Head of caudate nucleus (tissue), 42 donors: ENCODE measurements at regions of chr9 and their contacts with region 1.

Region 1: GRCh38 chr9:101229606-101230005 is 155.2 kb downstream of the BAAT start:
- DNase-seq: peak in 1 of 42 donors; percentile 19

Region 2: DNA sequence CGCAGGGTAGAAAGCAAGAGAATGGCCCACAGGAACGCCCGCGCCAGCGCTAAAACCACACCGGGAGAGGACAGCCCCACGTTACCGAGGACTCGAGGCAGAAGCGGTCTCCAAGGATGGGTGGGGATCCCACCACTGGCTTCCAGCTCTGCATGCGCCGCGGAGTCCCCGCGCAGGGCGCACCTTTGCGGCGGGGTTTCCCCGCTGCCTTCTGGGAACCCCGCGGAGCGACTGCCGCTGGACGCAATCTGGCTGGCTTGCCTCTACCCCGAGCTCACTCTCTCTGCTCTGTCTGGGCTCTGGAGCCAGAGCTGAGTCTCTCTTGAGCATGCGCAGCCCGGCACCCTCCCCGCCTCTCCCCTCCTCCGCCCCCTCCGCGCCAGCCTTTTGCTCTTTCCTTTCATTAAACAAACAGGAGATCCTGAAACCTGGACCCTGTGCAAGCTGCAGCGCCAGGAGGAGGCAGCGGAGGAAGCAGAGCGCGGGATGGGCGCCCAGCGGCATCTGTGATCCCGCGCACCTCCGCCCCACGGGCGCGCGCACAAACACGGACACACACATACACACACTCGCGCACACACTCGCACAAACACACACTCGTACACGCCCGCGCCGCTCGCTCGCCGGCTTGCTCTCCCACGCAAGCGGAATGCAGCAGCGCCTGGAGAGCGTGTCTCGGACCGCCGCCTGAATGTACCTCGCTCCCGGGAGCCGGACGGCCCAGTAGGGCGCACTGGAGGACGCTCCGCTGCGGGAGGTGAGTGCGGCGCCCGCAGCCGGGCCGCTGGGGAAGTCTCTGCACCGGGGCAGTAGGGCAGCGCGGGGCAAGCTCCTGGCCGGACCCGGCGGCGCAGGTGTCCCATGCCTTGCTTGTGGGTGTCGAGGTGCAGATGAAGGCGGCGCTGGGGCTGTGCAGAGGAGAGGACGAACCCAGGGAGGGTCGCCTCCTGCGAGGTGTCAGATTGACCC is 201.0 kb before region 1 on chr9 and contains the start of gene PLPPR1:
- intact Hi-C with region 1: loop called (anchors 5 kb)
- DNase-seq: peak; percentile 74 to 96 (median 89)

Region 3: DNA sequence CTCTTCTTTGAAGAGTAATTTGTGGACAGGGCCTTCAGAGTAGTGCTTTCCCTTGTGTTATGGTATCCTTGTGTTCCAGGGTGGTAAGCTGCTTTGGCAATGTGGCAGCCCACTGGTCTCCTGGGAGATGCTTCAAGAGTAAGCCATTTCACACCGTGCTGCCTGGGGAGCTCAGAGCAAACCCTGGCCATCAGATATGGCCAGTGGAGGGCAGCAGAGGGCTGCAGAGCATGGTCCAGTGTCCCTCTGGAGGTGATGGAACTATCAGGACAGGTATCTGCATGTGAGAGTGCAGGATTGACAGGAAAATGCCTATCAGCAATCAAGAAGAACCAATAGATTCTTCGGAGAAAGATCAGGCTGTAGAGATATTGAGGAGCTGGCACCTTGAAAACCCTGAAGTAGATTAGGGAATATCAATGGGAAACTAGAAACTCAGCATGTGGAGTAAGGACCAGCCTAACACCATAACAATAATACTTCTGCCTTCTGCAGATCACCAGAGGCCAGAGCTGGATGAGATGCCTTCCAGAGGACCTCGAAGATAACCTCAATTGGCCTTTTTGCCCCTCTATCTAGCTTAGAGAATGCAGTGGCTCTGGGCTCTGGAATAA is 110.3 kb before region 1 on chr9:
- intact Hi-C with region 1: loop called (anchors 5 kb)
- DNase-seq: peak; percentile 9 to 92 (median 73)

Region 4: DNA sequence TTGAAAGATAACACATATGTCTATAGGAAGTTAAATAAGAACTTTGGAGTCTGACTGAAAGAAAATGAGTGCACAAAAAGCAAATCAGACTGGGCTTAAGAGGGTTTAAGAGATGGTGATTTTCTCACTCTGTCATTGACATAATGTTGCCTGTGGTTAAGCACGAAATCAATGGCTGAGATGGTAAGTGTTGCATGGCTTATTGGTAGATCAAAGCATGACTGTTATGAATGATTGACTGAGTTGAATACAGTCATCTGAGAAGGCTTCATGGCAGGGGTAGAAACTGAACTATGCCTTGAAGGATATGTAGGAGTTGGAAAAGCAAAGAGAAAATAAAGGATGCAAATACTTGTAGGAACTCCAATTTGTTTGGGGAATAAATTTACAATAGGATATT is 64.5 kb before region 1 on chr9:
- intact Hi-C with region 1: loop called (anchors 2 kb)
- DNase-seq: no peak